GM10248 (cell line): ENCODE measurements at regions of chr2 and their contacts with region 1.

Region 1: GRCh38 chr2:170873035-170873692 is 55.9 kb upstream of the GORASP2 start:
- DNase-seq: peak; percentile 84
- CTCF ChIP-seq: peak; percentile 93

Region 2: GRCh38 chr2:170324640-170325046 is 548.5 kb before region 1 on chr2:
- CTCF ChIA-PET with region 1: interaction called, 24 read pairs
- POLR2A ChIA-PET with region 1: no interaction called
- DNase-seq: peak; percentile 43
- CTCF ChIP-seq: peak; percentile 69

Region 3: GRCh38 chr2:170815746-170816503 is 57.2 kb before region 1 on chr2:
- CTCF ChIA-PET with region 1: interaction called, 10 read pairs
- POLR2A ChIA-PET with region 1: no interaction called
- DNase-seq: peak; percentile 80
- CTCF ChIP-seq: peak; percentile 70

Region 4: GRCh38 chr2:170886386-170886785 is 13.2 kb after region 1 on chr2:
- CTCF ChIA-PET with region 1: interaction called, 80 read pairs
- POLR2A ChIA-PET with region 1: no interaction called
- DNase-seq: no peak
- CTCF ChIP-seq: no peak

Region 5: DNA sequence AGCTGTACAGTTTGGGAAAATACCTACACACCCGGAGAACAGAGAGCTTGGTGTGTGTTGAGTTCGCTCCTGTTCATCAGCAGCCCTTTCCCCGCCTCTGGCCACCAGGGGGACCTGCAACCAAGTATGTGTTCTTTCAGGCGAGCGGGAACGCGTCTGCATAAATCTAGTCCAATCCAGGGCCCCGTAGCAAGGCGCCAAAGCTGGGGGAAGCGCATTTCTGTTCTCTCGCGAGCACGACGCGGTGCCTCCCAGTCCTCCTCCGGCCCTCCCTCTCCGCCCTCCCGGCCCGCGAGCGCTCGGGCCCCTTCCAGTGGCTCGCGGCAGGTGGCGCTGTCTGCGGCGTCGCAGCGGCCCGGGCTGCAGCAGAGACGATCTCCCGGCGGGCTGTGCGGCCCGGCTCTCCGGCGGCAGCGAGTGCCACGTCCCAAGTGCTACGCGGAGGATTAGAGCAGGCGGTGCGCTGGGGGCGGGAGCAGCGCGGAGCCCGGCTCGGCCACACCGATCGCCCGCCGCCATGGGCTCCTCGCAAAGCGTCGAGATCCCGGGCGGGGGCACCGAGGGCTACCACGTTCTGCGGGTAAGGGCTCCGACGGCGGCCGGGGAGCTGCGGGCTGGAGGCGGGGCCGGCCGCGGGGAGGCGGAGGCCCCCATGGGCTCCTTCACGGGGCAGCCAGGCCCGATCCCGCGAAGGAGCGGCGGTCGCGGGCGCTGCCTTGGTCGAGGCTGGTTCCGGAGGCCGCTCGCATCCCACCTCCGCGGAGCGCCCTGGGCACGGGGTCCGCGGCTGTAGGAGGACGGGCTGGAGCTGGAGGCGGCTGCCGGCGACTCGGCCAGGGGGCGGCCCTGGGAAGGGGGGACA is 55.9 kb after region 1 on chr2 and contains the start of gene GORASP2:
- CTCF ChIA-PET with region 1: interaction called, 11 read pairs
- POLR2A ChIA-PET with region 1: interaction called, 3 read pairs
- DNase-seq: peak; percentile 98
- CTCF ChIP-seq: peak; percentile 83

Region 6: GRCh38 chr2:171128461-171128860 is 255.3 kb after region 1 on chr2:
- CTCF ChIA-PET with region 1: no interaction called
- POLR2A ChIA-PET with region 1: no interaction called
- DNase-seq: no peak
- CTCF ChIP-seq: no peak